Calu3 (cell line): ENCODE measurements at regions of chr14 and their contacts with region 1.

Region 1: GRCh38 chr14:87698511-87698910 is 294.5 kb downstream of the GALC start:
- DNase-seq: no peak
- H3K4me3 Mint-ChIP-seq: no peak overlapping the region
- H3K27ac Mint-ChIP-seq: no peak overlapping the region
- H3K4me1 Mint-ChIP-seq: no peaks in the 10 kb centered on the region
- H3K27me3 Mint-ChIP-seq: no peaks in the 10 kb centered on the region
- CTCF ChIP-seq: no peak

Region 2: DNA sequence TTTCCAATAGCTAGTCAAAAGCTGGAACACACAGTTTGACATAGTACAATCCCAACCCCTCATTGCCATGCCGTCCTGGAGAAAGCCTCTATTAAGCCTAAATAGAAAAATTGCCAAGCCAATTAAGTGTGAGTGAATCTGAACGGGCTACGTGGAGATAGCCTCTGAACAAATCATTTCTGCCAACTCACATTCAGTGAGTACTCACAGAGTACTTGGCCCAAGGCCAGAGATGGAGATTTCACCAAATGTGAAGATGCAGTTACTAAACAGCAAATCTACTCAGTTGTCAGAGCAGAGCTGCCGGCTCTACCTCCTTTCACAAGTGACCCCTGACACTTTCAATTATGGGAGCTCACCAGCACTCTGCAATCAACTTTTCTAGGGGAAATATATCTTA is 55.5 kb before region 1 on chr14:
- CTCF ChIA-PET with region 1: no interaction called
- intact Hi-C with region 1: loop called (anchors 1 kb)
- DNase-seq: no peak
- H3K4me3 Mint-ChIP-seq: no peak overlapping the region
- H3K27ac Mint-ChIP-seq: no peak overlapping the region
- H3K4me1 Mint-ChIP-seq: no peaks in the 10 kb centered on the region
- H3K27me3 Mint-ChIP-seq: no peaks in the 10 kb centered on the region
- CTCF ChIP-seq: no peak

Region 3: DNA sequence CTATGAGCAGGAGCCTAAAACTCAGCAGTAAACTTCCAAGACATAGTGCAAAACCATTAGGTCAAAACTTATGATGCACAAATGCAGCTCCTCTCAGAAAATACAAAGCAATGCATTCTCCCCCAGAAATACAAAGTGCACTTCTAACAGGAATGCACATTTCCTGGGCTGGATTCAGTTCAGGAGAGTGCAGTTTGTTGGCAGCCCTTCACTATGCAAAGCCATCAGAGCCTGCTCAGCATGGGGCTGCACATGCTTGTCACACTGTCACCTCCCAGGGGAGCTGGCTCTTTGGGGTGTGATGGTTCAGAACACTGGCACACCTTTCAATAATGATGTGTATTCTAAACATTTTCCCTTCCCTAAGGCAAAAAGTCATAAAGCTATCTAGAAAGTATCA is 514.2 kb after region 1 on chr14:
- CTCF ChIA-PET with region 1: no interaction called
- intact Hi-C with region 1: no loop called
- DNase-seq: no peak
- H3K4me3 Mint-ChIP-seq: no peak overlapping the region
- H3K27ac Mint-ChIP-seq: no peak overlapping the region
- H3K4me1 Mint-ChIP-seq: no peaks in the 10 kb centered on the region
- H3K27me3 Mint-ChIP-seq: no peaks in the 10 kb centered on the region
- CTCF ChIP-seq: no peak